ENCODE measurements at regions of chr15 and their contacts with region 1.

Region 1: DNA sequence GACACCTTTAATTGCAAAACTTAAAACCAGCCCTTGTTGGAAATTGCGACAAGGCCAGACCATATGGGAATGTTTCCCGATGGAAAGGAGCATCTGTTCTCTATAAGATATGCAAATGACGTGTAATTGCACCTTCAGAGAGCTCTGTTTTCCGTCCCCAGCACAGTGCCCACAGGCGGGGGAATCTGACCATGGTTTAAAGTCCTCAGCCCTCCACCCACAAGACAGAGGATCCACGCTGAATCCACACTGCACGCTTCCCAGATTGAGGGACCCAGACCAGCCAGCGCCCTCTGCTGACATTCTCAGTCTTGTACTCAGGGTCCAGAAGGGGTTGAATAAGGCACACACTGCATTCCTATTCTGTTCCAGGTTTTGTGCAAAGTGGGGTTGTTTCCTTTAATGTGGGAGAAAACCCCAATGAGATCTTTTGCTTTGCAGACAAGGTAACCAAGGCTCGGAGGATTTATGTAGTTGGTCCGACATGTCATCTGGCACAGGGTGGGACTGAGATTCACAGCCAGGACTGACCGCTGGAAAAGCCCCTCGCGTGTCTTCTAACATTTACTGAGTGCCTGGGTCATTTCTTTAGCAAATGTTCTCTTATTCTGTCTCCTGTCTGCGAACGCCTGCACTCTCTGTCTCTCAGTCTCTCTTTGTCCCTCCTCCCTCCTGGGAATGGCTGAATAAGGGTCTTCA is 36.8 kb upstream of the KLHL25 start:
- DNase-seq: peak; percentile 46 to 58
- ATAC-seq: peak; percentile 80 to 95
- H3K4me3 ChIP-seq: no peak overlapping the region
- H3K27ac ChIP-seq: no peak overlapping the region
- H3K4me1 ChIP-seq: no peaks in the 10 kb centered on the region
- H3K27me3 ChIP-seq: no peaks in the 10 kb centered on the region
- CTCF ChIP-seq: peak; percentile 55 to 74 (median 66)
- POLR2A ChIP-seq: no peak

Region 2: GRCh38 chr15:85296615-85297402 is 534.8 kb before region 1 on chr15:
- in situ Hi-C with region 1: loop called in 2 of 4 experiments (anchors 10 kb)
- intact Hi-C with region 1: no loop called
- DNase-seq: peak; percentile 20 to 55
- ATAC-seq: peak; percentile 97 to 99
- H3K4me3 ChIP-seq: peak overlapping the region; percentile 22 to 50 (median 36)
- H3K27ac ChIP-seq: peak overlapping the region in 1 of 4 donors; percentile 24
- H3K4me1 ChIP-seq: no peaks in the 10 kb centered on the region
- H3K27me3 ChIP-seq: no peaks in the 10 kb centered on the region
- CTCF ChIP-seq: peak; percentile 52 to 80 (median 68)
- POLR2A ChIP-seq: no peak

Region 3: DNA sequence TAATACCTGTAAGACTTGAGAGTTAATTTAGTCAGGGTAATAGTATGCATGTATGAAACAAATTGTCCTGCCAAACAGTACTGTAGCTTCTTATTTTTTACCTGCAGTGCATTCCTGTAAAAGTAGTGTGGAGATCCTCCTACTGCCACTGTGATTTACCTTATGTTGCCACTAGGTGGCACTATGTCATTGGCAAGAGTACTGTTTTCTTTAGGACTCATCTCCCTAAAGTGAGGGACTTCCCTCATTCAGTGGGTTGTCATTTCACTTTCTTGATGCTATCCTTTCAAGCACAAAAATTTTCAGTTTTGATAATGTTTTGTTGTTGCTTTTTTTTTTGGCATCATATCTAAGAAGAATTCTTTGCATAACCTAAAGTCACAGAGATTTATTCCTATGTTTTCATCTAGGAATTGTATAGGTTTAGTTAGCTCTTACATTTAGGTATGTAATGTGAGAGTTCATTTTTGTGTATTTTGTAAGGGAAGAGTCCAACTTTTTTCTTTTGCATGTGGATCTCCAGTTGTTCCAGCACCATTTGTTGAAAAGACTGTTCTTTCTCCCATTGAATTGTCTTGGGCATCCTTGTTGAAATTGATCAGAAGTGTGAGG is 345.5 kb before region 1 on chr15:
- in situ Hi-C with region 1: loop called in 3 of 4 experiments (anchors 10 to 25 kb)
- intact Hi-C with region 1: loop called (anchors 5 kb)
- DNase-seq: peak; percentile 25 to 45
- ATAC-seq: peak; percentile 87 to 94
- H3K4me3 ChIP-seq: no peak overlapping the region
- H3K27ac ChIP-seq: no peak overlapping the region
- H3K4me1 ChIP-seq: peaks cover 0 to 19% of the 10 kb centered on the region in 2 donors
- H3K27me3 ChIP-seq: no peaks in the 10 kb centered on the region
- CTCF ChIP-seq: peak; percentile 55 to 91 (median 78)
- POLR2A ChIP-seq: no peak

Region 4: DNA sequence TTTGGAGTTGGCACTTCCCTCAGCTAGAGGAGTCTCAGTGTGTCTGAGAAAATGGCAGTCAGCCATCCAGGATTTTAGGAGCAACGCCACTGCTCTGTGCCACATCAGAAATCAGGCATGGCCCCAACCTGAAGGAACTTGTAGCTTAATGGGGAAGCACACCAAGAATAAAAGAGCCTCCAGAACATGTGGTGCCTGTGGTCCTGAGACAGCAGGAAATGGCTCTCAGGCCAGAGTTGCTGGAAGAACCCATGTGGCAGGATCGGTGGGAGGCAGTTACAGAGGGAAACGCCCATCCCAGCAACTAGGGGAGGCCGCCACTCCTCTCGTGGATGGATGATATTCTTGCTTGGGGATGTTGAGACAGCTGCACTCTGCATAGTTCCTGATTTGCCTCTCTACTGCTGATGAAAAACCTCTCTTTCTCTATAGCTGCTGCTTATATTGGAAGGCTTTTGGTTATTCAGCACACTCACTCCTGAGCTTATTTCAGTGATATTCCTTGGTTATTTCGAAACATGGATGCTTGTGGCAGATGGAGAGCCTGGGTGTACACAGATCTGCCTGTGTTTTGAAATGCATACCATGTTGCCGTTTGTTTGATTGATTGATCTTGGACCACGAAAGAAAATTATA is 89.3 kb before region 1 on chr15:
- in situ Hi-C with region 1: loop called in 2 of 4 experiments (anchors 5 to 10 kb)
- intact Hi-C with region 1: no loop called
- DNase-seq: no peak
- ATAC-seq: peak in 1 of 2 donors; percentile 79
- H3K4me3 ChIP-seq: no peak overlapping the region
- H3K27ac ChIP-seq: peak overlapping the region; percentile 6 to 63 (median 52)
- H3K4me1 ChIP-seq: peaks cover 10 to 18% of the 10 kb centered on the region in 2 donors
- H3K27me3 ChIP-seq: no peaks in the 10 kb centered on the region
- CTCF ChIP-seq: no peak
- POLR2A ChIP-seq: no peak

Region 5: DNA sequence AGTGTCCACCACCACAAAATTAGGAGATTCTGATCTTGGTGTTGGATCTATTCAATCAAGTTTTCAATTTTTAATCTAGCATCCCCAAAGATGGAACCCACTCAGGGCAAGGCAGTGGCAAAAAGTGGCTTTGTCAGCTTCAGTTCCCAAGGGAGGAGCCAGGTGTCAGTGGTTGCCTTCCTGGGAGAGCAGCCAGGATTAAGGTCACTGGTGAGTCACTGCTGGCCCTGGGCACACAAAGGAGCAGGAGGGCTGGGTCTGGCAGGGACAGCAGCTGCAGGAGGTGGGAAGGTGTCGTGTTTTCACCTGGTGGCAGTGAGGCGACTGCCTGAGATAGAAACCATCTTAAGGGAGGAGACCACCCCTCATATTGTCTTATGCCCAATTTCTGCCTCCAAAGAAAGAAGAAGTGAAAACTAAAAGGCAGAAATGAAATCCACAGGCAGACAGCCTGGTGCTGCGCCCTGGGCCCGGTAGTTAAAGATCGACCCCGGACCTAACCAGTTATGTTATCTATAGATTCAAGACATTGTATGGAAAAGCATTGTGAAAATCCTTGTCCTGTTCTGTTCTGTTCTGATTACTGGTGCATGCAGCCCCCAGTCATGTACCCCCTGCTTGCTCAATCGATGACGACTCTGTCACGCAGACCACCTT is 31.0 kb before region 1 on chr15:
- in situ Hi-C with region 1: loop called in 1 of 4 experiments (anchors 5 kb)
- intact Hi-C with region 1: loop called (anchors 1 kb)
- DNase-seq: peak; percentile 89 to 95
- ATAC-seq: peak; percentile 99
- H3K4me3 ChIP-seq: no peak overlapping the region
- H3K27ac ChIP-seq: peak overlapping the region; percentile 46 to 61 (median 52)
- H3K4me1 ChIP-seq: peaks cover 19 to 21% of the 10 kb centered on the region in 2 donors
- H3K27me3 ChIP-seq: no peaks in the 10 kb centered on the region
- CTCF ChIP-seq: peak in 4 of 5 experiments; percentile 20 to 59 (median 54)
- POLR2A ChIP-seq: no peak

Region 6: DNA sequence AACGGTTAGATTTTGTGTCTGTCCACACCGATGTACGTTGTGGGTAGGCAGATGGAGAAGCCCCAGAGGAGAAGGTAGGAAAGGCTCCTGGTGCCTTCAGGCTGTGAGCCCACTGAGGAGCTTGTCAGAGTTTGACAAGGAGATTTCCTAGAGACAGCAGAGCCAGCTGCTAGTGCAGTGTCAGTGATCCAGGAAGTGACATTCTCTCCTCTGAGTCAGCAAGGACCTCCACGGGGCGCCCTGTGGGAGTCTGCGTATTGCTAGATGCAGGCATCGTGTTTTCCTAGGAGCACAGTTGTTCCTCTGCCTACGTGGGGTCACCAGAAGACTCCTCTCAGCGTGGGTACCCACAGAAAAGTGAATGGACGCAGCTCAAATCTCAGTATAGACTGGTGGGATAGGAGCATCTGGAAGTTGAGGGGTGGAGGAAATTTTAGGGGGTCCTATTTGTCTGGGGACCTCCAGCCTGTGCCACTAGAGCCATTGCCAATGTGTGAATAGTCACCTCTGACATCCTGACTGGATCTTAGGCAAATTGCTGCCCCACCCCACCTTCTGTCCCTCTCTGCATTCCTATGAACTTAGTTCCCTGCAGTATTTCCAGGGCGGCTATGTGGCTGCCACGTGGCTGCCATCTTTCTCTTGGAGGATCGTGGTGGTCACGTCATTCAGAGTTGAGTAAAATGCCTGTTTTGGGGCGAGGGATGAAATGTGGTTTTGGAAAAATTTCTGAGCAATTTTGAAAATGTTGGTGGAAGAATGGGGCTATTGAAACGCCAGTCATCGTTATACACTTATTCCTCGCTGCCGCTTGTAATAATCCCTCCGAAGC is 48.0 kb after region 1 on chr15:
- in situ Hi-C with region 1: no loop called
- intact Hi-C with region 1: no loop called
- DNase-seq: no peak
- ATAC-seq: peak in 1 of 2 donors; percentile 55
- H3K4me3 ChIP-seq: no peak overlapping the region
- H3K27ac ChIP-seq: no peak overlapping the region
- H3K4me1 ChIP-seq: no peaks in the 10 kb centered on the region
- H3K27me3 ChIP-seq: peaks cover 0 to 3% (median 2%) of the 10 kb centered on the region in 3 donors
- CTCF ChIP-seq: no peak
- POLR2A ChIP-seq: no peak

Measured in gastrocnemius medialis (tissue), 4 donors.